H1 (cell line): ENCODE measurements at regions of chr1 and their contacts with region 1.

Region 1: DNA sequence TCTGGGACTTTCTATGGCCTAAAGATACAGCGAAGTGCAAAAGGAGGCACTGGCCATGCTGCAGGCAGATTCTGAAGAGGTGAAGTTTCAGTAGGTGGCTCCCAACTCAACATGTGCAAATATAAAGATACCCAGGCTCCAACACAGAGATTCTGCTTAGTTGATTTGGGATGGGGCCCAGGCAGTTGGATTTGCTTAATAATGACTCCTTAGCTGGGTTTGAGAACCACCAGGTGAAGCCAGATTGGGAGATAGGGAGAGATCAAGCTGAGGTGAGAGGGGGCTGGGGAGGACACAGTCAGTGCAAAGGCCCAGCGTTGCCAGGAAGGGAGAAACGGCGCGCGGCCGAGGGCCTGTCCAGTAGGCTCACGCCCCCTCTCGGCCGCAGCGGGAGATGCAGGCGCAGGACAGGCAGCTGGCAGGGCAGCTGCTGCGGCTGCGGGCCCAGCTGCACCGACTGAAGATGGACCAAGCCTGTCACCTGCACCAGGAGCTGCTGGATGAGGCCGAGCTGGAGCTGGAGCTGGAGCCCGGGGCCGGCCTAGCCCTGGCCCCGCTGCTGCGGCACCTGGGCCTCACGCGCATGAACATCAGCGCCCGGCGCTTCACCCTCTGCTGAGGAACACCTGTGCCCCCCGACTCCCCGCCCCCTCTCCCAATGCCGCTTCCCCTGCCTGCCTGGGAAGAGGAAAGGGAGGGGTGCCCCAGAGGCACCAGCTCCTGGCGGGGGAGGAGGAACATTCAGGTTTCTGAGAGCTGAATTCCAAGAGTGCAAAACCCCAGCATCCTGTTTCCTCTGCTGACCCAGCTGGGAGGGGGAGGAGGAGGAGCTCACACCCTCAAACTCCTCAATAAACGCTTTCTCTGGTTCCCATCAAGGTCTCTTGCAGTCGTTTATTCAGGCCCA is 1.2 kb downstream of the FAM167B start:
- DNase-seq: peak; percentile 83 to 97
- H3K4me3 ChIP-seq: peak overlapping the region; percentile 1 to 55 (median 14); a peak in 4 of 8 replicates
- H3K27ac ChIP-seq: no peak overlapping the region
- H3K4me1 ChIP-seq: peaks cover 6 to 13% (median 8%) of the 10 kb centered on the region in 4 experiments
- H3K27me3 ChIP-seq: no peaks in the 10 kb centered on the region; a peak in 1 of 7 replicates
- CTCF ChIP-seq: peak; percentile 81 to 98 (median 96)
- EP300 ChIP-seq: no peak
- POLR2A ChIP-seq: no peak
- RAD21 ChIP-seq: peak; percentile 64 to 71

Region 2: GRCh38 chr1:32273388-32274208 is 25.4 kb after region 1 on chr1:
- CTCF ChIA-PET with region 1: interaction called, 27 read pairs
- POLR2A ChIA-PET with region 1: interaction called, 11 read pairs
- DNase-seq: peak; percentile 77
- H3K4me3 ChIP-seq: peak overlapping the region; percentile 30 to 56 (median 38)
- H3K27ac ChIP-seq: no peak overlapping the region
- H3K4me1 ChIP-seq: peaks cover 6 to 33% (median 19%) of the 10 kb centered on the region in 4 experiments
- H3K27me3 ChIP-seq: no peaks in the 10 kb centered on the region
- CTCF ChIP-seq: peak in 1 of 3 experiments; percentile 10; a peak in 1 of 4 replicates
- EP300 ChIP-seq: no peak
- POLR2A ChIP-seq: peak in 1 of 2 experiments; percentile 67; a peak in 2 of 3 replicates
- RAD21 ChIP-seq: no peak

Region 3: DNA sequence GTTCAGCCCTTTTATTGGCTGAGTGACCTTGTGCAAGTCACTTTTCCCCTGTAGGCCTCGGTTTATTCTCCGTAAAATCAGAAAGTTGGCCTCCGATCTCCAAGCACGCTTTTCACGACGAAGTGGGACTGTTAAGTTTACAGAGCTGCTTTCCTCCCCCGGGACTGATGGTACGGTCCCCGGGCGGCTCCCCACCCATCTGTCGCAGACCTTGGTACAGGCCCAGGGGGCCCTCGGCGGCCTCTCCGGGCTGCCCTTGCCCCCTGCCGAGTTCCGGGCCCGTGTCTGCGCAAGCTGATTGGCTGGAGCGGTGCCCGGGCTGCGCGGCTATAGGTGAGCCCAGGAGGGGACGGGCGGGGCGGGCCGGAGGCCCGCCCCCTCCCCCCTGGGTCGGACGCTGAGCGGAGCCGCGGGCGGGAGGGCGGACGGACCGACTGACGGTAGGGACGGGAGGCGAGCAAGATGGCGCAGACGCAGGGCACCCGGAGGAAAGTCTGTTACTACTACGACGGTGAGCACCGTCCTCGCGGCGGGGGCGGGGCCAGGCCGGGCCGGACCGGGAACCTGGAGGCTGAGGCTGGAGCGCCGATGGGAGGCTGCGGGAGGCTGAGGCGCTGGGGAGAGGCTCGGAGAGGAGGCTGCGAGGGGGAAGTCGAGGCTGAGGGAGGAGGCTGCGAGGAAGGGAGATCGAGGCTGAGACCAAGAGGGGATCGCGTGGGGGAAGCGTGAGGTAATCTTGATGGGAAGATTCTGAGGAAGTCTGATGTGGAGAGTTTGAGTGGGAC is 43.7 kb after region 1 on chr1 and contains the start of gene HDAC1:
- CTCF ChIA-PET with region 1: interaction called, 34 read pairs
- POLR2A ChIA-PET with region 1: interaction called, 9 read pairs
- DNase-seq: peak; percentile 84 to 93
- H3K4me3 ChIP-seq: peak within 1 kb of the TSS; percentile 77 to 98 (median 96)
- H3K27ac ChIP-seq: no peak within 1 kb of the TSS
- H3K4me1 ChIP-seq: peaks cover 0 to 5% (median 4%) of the 10 kb centered on the region in 4 experiments
- H3K27me3 ChIP-seq: no peaks in the 10 kb centered on the region
- CTCF ChIP-seq: no peak
- EP300 ChIP-seq: peak; percentile 30 to 92
- POLR2A ChIP-seq: peak in 1 of 2 experiments; percentile 39; a peak in 1 of 3 replicates
- RAD21 ChIP-seq: no peak
- total RNA-seq, gene HDAC1: 111 and 112 TPM in 2 replicates

Region 4: GRCh38 chr1:32303997-32304622 is 55.9 kb after region 1 on chr1:
- CTCF ChIA-PET with region 1: interaction called, 16 read pairs
- POLR2A ChIA-PET with region 1: interaction called, 3 read pairs
- DNase-seq: no peak
- H3K4me3 ChIP-seq: no peak overlapping the region
- H3K27ac ChIP-seq: no peak overlapping the region
- H3K4me1 ChIP-seq: no peaks in the 10 kb centered on the region
- H3K27me3 ChIP-seq: no peaks in the 10 kb centered on the region
- CTCF ChIP-seq: no peak
- EP300 ChIP-seq: no peak
- POLR2A ChIP-seq: no peak
- RAD21 ChIP-seq: no peak

Region 5: GRCh38 chr1:32321712-32322291 is 73.6 kb after region 1 on chr1:
- CTCF ChIA-PET with region 1: interaction called, 36 read pairs
- POLR2A ChIA-PET with region 1: interaction called, 4 read pairs
- DNase-seq: no peak
- H3K4me3 ChIP-seq: no peak overlapping the region
- H3K27ac ChIP-seq: no peak overlapping the region
- H3K4me1 ChIP-seq: no peaks in the 10 kb centered on the region
- H3K27me3 ChIP-seq: no peaks in the 10 kb centered on the region
- CTCF ChIP-seq: no peak
- EP300 ChIP-seq: no peak
- POLR2A ChIP-seq: no peak
- RAD21 ChIP-seq: no peak

Region 6: GRCh38 chr1:32361674-32362473 is 113.6 kb after region 1 on chr1:
- CTCF ChIA-PET with region 1: no interaction called
- POLR2A ChIA-PET with region 1: no interaction called
- DNase-seq: peak in 1 of 2 experiments; percentile 82
- H3K4me3 ChIP-seq: peak overlapping the region; percentile 11 to 53 (median 26)
- H3K27ac ChIP-seq: no peak overlapping the region
- H3K4me1 ChIP-seq: peaks cover 0 to 3% (median 1%) of the 10 kb centered on the region in 4 experiments; a peak in 4 of 7 replicates
- H3K27me3 ChIP-seq: peaks cover 3 to 24% (median 14%) of the 10 kb centered on the region in 4 experiments
- CTCF ChIP-seq: peak in 2 of 3 experiments; percentile 21 to 23; a peak in 2 of 4 replicates
- EP300 ChIP-seq: no peak
- POLR2A ChIP-seq: peak; percentile 17 to 51; a peak in 2 of 3 replicates
- RAD21 ChIP-seq: no peak; a peak in 1 of 4 replicates

Region 7: DNA sequence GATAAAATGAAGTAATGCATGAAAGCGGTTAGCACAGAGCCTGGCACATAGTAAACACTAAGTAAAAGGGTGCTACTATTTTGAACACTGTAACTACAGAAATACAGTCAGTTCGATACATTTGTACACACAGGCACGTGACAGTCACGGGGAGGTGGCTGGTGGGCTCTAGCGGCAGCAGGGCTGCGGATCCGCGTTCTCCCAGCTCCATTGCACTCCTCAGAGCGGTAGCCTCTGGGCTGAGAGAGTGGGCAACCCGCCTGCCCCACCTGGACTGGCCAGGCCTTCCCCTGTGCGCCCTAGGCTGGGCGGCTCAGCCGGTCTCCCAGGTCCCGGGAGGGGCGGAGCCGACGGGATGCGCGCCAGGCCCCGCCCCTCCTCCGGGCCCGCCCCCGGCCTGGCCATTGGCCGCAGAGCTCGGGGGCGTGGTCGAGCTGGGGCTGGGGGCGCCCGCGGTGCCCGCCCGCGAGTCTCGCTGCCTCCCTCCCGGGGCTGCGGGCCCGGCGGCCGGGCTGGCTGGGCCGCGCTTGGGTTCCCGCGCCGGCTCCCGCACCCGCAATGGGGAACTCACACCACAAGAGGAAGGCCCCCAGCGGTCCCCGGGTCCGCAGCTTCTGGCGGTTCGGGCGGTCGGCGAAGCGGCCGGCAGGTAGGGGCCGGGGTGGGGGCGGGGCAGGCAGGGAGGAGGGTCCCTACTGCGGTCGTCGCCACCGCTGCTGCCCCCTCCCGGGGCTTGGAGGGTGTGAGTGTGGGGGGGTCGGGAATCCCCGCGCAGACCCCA is 505.5 kb after region 1 on chr1:
- CTCF ChIA-PET with region 1: no interaction called
- POLR2A ChIA-PET with region 1: no interaction called
- DNase-seq: peak; percentile 59 to 91
- H3K4me3 ChIP-seq: peak overlapping the region; percentile 79 to 100 (median 94)
- H3K27ac ChIP-seq: peak overlapping the region; percentile 92
- H3K4me1 ChIP-seq: peaks cover 16 to 37% (median 22%) of the 10 kb centered on the region in 4 experiments
- H3K27me3 ChIP-seq: no peaks in the 10 kb centered on the region
- CTCF ChIP-seq: peak in 1 of 3 experiments; percentile 26; a peak in 1 of 4 replicates
- EP300 ChIP-seq: no peak
- POLR2A ChIP-seq: peak in 1 of 2 experiments; percentile 70; a peak in 2 of 3 replicates
- RAD21 ChIP-seq: peak; percentile 3 to 15; a peak in 2 of 4 replicates